ENCODE measurements at regions of chr4 and their contacts with region 1.

Region 1: DNA sequence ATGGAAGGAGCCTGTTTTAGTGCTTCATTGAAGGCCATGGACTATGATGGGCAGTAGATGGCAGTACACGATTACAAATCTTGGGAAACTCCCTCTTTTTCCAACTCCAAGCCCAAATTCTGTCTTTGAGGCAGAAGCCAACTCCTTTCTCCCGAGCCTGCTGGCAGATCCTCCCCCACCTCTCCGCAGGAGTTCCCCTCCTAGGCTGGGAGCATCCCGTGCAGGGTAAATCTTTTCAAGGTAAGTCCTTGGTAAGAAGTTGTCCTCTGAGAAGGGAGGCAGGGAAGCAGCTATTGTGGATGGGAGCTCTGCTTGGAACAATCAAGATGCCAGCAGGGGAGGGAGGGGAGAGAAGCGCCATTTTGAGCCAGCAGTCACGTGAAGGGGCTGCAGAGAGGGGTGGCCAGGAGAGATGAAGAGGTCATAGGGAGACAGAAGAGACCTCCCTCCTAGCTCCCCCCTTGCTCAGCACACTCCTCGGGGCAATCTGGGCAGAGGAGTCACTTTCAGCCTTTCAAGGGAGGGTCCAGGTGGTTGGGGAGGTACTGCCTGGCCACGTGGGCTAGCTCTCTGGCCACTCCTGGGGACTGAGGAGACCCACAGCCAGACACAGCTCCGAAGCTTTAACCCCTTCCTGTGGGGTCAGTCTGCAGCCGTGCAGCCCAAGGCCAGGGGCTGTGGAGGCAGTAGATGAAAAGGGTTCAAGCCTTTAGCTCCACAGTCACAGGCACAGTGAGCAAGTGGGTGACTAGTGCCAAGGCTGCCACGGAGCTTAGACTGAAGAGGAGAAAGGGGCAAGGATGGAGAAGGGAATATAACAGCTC is 9.6 kb downstream of the CC2D2A start:
- DNase-seq: no peak
- H3K4me3 Mint-ChIP-seq: no peak overlapping the region
- H3K27ac Mint-ChIP-seq: no peak overlapping the region
- H3K4me1 Mint-ChIP-seq: no peaks in the 10 kb centered on the region
- H3K27me3 Mint-ChIP-seq: no peaks in the 10 kb centered on the region

Region 2: GRCh38 chr4:15729910-15730533 is 250.7 kb after region 1 on chr4:
- CTCF ChIA-PET with region 1: no interaction called
- intact Hi-C with region 1: loop called (anchors 2 kb)
- DNase-seq: peak; percentile 54
- H3K4me3 Mint-ChIP-seq: no peak overlapping the region
- H3K27ac Mint-ChIP-seq: no peak overlapping the region
- H3K4me1 Mint-ChIP-seq: peaks cover 13% of the 10 kb centered on the region
- H3K27me3 Mint-ChIP-seq: no peaks in the 10 kb centered on the region

Region 3: DNA sequence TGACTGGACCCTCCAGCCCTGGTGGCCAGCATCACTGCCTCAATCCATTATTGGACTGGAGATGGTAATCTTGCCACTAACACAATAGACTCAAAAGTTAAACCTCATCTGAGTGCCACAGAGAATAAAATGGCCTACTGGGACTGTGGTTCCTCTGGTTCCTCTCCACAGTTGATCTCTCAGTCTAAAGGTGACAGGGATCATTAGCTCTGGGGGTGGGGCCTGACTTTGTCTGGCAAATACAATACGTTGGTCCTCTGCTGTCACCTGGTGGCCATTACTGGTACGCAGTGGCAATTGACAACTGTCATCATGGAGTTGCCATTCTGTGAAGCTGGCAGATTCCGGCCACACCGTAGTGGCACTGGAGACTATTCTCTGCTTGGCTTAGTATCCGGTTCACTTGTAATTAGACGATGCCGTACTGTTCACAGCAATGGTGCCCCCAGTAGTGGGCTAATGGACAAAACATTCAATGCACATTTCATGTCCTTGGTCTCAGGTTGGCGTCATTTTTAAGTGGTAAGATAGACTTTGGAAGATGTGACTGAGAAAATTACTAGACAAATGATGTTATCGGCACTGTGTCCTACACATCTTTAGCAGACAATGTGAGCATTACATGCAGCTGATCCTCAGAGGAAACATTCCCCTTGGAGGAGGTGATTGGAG is 477.0 kb after region 1 on chr4:
- CTCF ChIA-PET with region 1: interaction called, 6 read pairs
- intact Hi-C with region 1: loop called (anchors 1 kb)
- DNase-seq: peak; percentile 93
- H3K4me3 Mint-ChIP-seq: no peak overlapping the region
- H3K27ac Mint-ChIP-seq: no peak overlapping the region
- H3K4me1 Mint-ChIP-seq: no peaks in the 10 kb centered on the region
- H3K27me3 Mint-ChIP-seq: no peaks in the 10 kb centered on the region

Measured in activated naive CD4-positive, alpha-beta T cell treated with anti-CD3 and anti-CD28 coated beads for 36 hours (primary cell).